Pancreas (tissue), 10 donors: ENCODE measurements at regions of chr7 and their contacts with region 1.

Region 1: GRCh38 chr7:39949980-39950472 is at the start of gene CDK13:
- DNase-seq: peak in 5 of 6 donors; percentile 75 to 86 (median 80)
- ATAC-seq: peak; percentile 49 to 64 (median 53)
- H3K4me3 ChIP-seq: peak within 1 kb of the TSS; percentile 89 to 95 (median 92)
- H3K27ac ChIP-seq: peak within 1 kb of the TSS; percentile 98 to 99 (median 99)
- H3K4me1 ChIP-seq: peaks cover 12 to 17% (median 16%) of the 10 kb centered on the region in 3 donors
- H3K27me3 ChIP-seq: no peaks in the 10 kb centered on the region
- CTCF ChIP-seq: no peak
- total RNA-seq, gene CDK13: 20.7 to 34.7 (median 23.5) TPM

Region 2: DNA sequence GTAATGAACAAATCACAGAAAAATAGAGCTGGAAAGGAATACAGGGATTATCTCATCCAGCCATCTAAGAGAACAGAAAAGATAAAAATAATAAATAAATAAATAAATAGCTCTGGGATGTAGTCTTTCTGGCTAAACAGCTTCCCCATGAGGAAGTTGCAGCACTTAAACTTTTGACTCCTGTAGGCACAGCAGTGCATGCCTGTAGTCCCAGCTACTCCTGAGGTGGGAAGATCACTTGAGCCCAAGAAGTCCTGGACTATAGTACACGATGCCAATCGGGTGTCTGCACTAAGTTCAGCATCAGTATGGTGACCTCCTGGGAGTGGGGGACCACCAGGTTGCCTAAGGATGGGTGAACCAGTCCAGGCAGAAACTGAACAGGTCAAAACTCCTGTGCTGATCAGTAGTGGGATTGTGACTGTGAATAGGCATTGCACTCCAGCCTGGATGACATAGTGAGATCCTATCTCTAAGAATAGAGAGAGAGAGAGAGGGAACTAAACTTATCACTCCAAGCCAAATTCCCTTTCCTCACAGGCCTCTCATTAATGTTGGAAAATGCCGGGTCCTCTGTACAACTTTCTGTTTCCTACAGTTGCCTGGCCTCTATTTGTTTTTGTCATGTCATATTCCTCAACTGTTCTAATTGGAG is 61.7 kb before region 1 on chr7:
- intact Hi-C with region 1: no loop called
- DNase-seq: no peak
- ATAC-seq: peak in 1 of 4 donors; percentile 31
- H3K4me3 ChIP-seq: no peak overlapping the region
- H3K27ac ChIP-seq: no peak overlapping the region
- H3K4me1 ChIP-seq: no peaks in the 10 kb centered on the region
- H3K27me3 ChIP-seq: no peaks in the 10 kb centered on the region
- CTCF ChIP-seq: no peak

Region 3: GRCh38 chr7:39987476-39988347 is 37.7 kb after region 1 on chr7:
- intact Hi-C with region 1: loop called in 1 of 3 experiments (anchors 5 kb)
- DNase-seq: no peak
- ATAC-seq: peak in 2 of 4 donors; percentile 24 to 34
- H3K4me3 ChIP-seq: no peak overlapping the region
- H3K27ac ChIP-seq: no peak overlapping the region
- H3K4me1 ChIP-seq: peaks cover 0 to 9% (median 8%) of the 10 kb centered on the region in 3 donors
- H3K27me3 ChIP-seq: no peaks in the 10 kb centered on the region
- CTCF ChIP-seq: no peak